Ascending aorta (tissue), 2 donors: ENCODE measurements at regions of chr7 and their contacts with region 1.

Region 1: DNA sequence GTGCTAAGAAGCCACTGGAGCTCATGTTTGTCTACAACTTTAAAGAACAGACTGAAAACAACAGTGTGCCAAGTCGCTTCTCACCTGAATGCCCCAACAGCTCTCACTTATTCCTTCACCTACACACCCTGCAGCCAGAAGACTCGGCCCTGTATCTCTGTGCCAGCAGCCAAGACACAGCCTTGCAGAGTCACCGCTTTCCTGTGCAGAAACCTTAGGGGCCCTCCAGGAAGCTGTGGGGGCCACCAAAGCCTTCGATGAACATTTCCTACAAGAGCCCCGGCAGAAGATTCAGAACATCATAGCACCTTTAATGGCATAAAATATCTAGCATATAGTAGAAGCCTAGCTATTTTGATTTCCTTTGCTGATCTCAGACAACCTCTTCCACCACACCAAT is 88.0 kb upstream of the PRSS58 start:
- DNase-seq: no peak
- H3K4me3 ChIP-seq: no peak overlapping the region
- H3K27ac ChIP-seq: no peak overlapping the region
- H3K4me1 ChIP-seq: no peaks in the 10 kb centered on the region
- H3K27me3 ChIP-seq: no peaks in the 10 kb centered on the region
- CTCF ChIP-seq: no peak

Region 2: DNA sequence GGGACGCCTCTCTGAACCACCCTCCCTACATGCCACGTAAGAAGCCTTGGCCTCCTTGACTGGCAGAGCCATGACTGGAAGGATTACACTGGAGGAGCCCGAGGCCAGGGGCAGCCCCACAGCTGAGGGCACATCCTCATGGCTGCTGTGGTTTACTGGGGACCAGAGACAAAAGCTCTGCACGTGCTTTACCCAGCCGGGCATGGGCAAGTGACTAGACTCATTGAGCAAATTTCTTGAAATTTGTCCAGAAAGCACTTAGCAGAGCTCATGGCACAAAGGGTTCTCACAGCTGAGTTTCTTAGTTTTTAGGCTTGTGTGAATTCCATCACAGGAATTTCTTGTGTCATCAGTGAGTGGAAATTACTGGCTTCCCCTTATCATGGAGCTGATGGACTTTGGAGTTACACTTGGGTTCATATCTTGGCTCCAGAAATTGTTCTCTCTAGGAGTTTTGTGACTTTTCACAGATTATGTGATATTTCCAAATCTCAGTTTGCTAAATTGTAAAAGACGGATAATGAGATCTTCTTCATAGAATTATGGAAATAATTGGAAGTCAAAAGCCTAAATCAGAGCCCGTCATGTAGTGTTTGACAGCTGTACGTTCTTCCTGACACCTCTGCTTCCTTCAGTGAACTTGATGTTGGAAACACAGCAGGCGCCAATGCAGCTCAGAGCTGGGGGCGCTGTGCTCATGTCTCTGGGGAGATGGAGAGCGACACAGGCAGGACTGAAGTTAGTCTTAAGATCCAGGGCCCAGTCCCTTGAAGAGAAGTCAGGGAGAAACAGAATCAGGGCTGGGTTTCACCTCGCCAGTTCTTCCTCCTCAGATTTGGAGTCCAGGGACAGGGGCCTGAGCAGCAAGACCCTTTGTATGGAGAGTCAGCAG is 282.0 kb before region 1 on chr7:
- intact Hi-C with region 1: no loop called
- DNase-seq: no peak
- H3K4me3 ChIP-seq: no peak overlapping the region
- H3K27ac ChIP-seq: no peak overlapping the region
- H3K4me1 ChIP-seq: no peaks in the 10 kb centered on the region
- H3K27me3 ChIP-seq: no peaks in the 10 kb centered on the region
- CTCF ChIP-seq: no peak

Region 3: DNA sequence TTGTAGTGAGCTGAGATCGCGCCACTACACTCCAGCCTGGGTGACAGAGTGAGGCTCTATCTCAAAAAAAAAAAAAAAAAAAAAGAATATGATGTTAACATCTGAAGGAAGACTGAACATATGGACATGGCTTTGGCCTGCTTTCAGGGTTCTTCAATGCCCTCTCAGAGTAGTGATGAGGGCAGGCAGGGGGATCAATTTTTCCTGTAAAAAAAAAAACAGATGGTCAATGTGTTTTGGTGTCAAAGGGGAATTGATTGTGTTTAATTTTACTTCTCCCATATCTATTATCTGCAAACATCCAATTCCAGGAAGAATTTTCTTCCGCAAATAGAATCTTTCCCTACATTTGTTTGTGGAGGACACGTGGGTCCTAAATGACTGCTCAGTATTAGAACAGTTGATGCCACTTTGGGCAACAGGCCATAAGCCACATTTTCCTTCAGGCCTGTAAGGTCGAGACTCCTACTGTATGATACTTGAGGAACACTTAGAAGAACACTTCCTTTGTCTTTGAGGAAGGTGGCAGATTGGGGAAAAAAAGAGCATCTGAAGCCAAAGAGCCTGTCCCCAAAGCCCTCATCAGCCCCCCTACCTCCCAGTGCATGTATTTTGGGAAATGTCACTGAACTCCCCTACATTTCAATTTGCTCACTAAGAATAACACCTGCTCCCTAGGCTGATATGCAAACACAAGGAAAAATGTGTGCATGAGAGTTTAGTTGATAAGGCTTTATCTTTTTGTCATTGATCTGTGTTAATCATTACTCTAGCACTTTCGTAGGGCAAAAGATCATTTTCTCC is 206.0 kb before region 1 on chr7:
- intact Hi-C with region 1: no loop called
- DNase-seq: no peak
- H3K4me3 ChIP-seq: no peak overlapping the region
- H3K27ac ChIP-seq: no peak overlapping the region
- H3K4me1 ChIP-seq: no peaks in the 10 kb centered on the region
- H3K27me3 ChIP-seq: no peaks in the 10 kb centered on the region
- CTCF ChIP-seq: no peak

Region 4: DNA sequence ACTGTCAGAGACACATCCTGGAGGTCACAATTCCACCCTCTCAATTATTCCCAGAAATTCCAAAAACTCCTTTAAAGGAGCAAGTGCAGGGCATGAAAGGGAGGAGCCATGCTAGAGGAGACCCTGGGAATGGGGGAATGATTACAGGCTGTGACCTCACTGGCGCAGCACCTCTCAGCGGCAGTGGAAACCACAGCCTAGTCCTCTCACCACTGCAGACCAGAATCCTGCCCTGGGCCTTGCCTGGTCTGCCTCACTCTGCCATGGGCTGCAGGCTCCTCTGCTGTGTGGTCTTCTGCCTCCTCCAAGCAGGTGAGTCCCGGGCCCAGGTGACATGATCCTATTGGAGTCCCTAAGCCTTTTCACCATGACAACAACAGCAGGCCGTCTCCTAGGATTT is 37.5 kb before region 1 on chr7:
- intact Hi-C with region 1: loop called (anchors 2 kb)
- DNase-seq: no peak
- H3K4me3 ChIP-seq: no peak overlapping the region
- H3K27ac ChIP-seq: no peak overlapping the region
- H3K4me1 ChIP-seq: no peaks in the 10 kb centered on the region
- H3K27me3 ChIP-seq: no peaks in the 10 kb centered on the region
- CTCF ChIP-seq: no peak